ENCODE measurements at regions of chr1 and their contacts with region 1.

Region 1: GRCh38 chr1:94713472-94714141 is 106.5 kb upstream of the SLC44A3 start:
- DNase-seq: peak; percentile 98
- H3K4me3 ChIP-seq: no peak overlapping the region
- H3K27ac ChIP-seq: peak overlapping the region; percentile 73
- H3K4me1 ChIP-seq: peaks cover 31% of the 10 kb centered on the region
- H3K27me3 ChIP-seq: no peaks in the 10 kb centered on the region
- CTCF ChIP-seq: no peak

Region 2: DNA sequence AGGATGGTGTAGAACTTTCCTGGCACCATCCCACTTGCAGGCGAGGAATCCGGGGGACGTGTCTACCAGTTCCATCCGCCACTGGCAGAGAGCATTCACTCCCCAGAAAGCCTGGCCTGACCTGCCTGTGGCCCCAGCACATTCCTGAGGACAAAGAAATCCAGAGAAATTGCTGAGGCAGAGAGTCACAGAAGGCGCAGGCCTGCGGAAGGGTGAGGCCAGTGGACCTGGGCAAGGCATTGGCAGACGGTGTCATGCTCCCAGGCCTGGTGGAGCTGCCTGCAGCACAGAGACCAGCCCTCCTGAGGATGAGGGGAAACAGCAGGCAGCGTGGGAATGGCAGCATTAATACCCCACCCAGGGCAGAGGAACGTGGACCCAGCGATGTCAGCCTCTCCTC is 90.8 kb before region 1 on chr1:
- CTCF ChIA-PET with region 1: no interaction called
- dilution Hi-C with region 1: no loop called
- in situ Hi-C with region 1: no loop called
- intact Hi-C with region 1: loop called (anchors 1 kb)
- DNase-seq: peak; percentile 91
- H3K4me3 ChIP-seq: no peak overlapping the region
- H3K27ac ChIP-seq: peak overlapping the region; percentile 87
- H3K4me1 ChIP-seq: peaks cover 55% of the 10 kb centered on the region
- H3K27me3 ChIP-seq: no peaks in the 10 kb centered on the region
- CTCF ChIP-seq: no peak

Region 3: GRCh38 chr1:94792473-94793295 is 79.1 kb after region 1 on chr1:
- CTCF ChIA-PET with region 1: no interaction called
- dilution Hi-C with region 1: loop called (anchors 5 kb)
- in situ Hi-C with region 1: no loop called
- intact Hi-C with region 1: no loop called
- DNase-seq: peak; percentile 96
- H3K4me3 ChIP-seq: peak overlapping the region in 1 of 3 experiments; percentile 16
- H3K27ac ChIP-seq: peak overlapping the region; percentile 81
- H3K4me1 ChIP-seq: peaks cover 35% of the 10 kb centered on the region
- H3K27me3 ChIP-seq: no peaks in the 10 kb centered on the region
- CTCF ChIP-seq: peak; percentile 41 to 56

Region 4: GRCh38 chr1:95116580-95117206 is 403.1 kb after region 1 on chr1:
- CTCF ChIA-PET with region 1: no interaction called
- dilution Hi-C with region 1: no loop called
- in situ Hi-C with region 1: no loop called
- intact Hi-C with region 1: no loop called
- DNase-seq: peak; percentile 46
- H3K4me3 ChIP-seq: peak overlapping the region; percentile 61 to 70 (median 64)
- H3K27ac ChIP-seq: no peak overlapping the region
- H3K4me1 ChIP-seq: peaks cover 7% of the 10 kb centered on the region
- H3K27me3 ChIP-seq: peaks cover 6% of the 10 kb centered on the region
- CTCF ChIP-seq: peak; percentile 49 to 62